KBM-7 (cell line): ENCODE measurements at regions of chr6 and their contacts with region 1.

Region 1: DNA sequence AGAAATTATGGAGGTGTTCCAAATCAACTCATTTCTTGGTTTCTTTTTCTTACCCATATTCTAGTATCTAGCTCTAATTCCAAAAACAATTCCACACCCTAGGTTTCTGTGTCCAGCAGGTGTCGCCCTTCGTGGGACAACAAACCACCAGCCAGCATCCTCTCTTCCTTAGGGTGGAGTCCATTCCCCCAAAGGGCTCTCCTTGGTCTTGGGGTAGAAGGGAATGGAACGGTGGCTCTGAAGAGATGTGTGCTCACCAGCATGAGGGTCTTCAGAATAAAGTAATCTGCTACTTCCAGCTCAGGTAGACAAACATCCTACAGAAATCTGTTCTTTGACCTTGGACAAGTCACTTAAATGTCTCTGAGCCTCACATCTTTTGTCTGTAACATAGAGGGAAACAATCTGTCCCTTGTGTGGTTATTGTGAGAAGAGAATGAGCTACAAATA is 7.2 kb downstream of the HLA-DMB start:
- DNase-seq: peak; percentile 85

Region 2: GRCh38 chr6:32885698-32886286 is 47.9 kb before region 1 on chr6:
- in situ Hi-C with region 1: loop called (anchors 10 kb)
- DNase-seq: peak; percentile 82